Naive thymus-derived CD4-positive, alpha-beta T cell (primary cell): ENCODE measurements at regions of chr10 and their contacts with region 1.

Region 1: GRCh38 chr10:68331455-68332258 is at the start of gene HNRNPH3:
- DNase-seq: peak; percentile 97 to 99 (median 99)
- ATAC-seq: peak; percentile 86
- H3K4me3 ChIP-seq: peak within 1 kb of the TSS; percentile 92
- H3K4me3 Mint-ChIP-seq: peak within 1 kb of the TSS; percentile 94 to 100 (median 100)
- H3K27ac ChIP-seq: peak within 1 kb of the TSS; percentile 99
- H3K27ac Mint-ChIP-seq: peak within 1 kb of the TSS; percentile 98 to 100 (median 100)
- H3K4me1 ChIP-seq: peaks cover 15 to 21% of the 10 kb centered on the region in 2 donors
- H3K4me1 Mint-ChIP-seq: peaks cover 40 to 65% (median 53%) of the 10 kb centered on the region in 7 donors
- H3K27me3 ChIP-seq: no peaks in the 10 kb centered on the region
- H3K27me3 Mint-ChIP-seq: peaks cover 0 to 4% (median 0%) of the 10 kb centered on the region in 5 donors
- total RNA-seq, gene HNRNPH3: 125 to 190 (median 156) TPM

Region 2: DNA sequence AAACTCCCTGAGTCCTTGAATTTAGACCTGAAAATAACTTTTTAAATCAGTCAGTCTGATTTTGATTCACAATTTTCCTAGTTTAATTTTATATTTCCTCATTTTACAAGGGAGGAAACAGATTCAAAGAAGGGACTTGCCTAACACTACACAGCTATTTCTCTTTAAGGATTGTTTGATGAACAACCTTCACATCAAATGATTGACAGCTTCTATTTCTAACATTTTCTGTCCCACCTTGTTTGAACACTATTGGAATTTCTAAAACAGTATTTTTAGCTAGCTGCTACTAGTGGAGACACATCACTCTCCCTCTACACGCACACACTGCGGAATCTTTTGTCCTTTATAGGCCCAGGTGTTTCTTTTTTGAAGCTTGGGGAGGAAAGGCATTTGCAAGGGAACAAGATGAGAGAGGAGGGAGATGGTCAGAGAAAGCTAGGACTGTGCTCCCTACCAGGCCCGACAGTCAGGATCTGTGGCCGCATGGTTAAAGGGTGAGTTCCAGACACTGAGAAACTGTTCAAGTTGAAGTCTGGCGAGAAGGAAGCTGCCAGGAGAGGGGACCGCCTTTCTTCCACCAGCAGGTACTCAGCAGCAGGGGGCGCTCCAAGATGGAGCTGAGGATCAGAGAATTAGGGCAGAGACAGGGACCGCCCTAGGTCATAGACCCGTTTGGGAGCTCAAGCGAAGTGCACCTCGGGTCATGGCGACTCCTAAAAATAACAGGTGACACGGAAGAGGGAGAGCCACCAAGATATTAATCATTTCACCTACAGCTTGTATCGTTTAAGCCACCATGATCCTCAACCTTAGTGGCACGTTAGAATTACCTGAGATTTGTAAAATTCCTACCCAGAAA is 543.4 kb before region 1 on chr10:
- CTCF ChIA-PET with region 1: no interaction called
- POLR2A ChIA-PET with region 1: no interaction called
- intact Hi-C with region 1: loop called in 1 of 2 experiments (anchors 2 kb)
- DNase-seq: peak; percentile 23 to 74 (median 52)
- ATAC-seq: peak; percentile 84
- H3K4me3 ChIP-seq: no peak overlapping the region
- H3K4me3 Mint-ChIP-seq: peak overlapping the region in 5 of 10 donors; percentile 2 to 71 (median 59)
- H3K27ac ChIP-seq: no peak overlapping the region
- H3K27ac Mint-ChIP-seq: peak overlapping the region in 3 of 9 donors; percentile 15 to 79 (median 35)
- H3K4me1 ChIP-seq: peaks cover 0 to 4% of the 10 kb centered on the region in 2 donors
- H3K4me1 Mint-ChIP-seq: peaks cover 11 to 54% (median 15%) of the 10 kb centered on the region in 7 donors
- H3K27me3 ChIP-seq: no peaks in the 10 kb centered on the region
- H3K27me3 Mint-ChIP-seq: no peaks in the 10 kb centered on the region

Region 3: DNA sequence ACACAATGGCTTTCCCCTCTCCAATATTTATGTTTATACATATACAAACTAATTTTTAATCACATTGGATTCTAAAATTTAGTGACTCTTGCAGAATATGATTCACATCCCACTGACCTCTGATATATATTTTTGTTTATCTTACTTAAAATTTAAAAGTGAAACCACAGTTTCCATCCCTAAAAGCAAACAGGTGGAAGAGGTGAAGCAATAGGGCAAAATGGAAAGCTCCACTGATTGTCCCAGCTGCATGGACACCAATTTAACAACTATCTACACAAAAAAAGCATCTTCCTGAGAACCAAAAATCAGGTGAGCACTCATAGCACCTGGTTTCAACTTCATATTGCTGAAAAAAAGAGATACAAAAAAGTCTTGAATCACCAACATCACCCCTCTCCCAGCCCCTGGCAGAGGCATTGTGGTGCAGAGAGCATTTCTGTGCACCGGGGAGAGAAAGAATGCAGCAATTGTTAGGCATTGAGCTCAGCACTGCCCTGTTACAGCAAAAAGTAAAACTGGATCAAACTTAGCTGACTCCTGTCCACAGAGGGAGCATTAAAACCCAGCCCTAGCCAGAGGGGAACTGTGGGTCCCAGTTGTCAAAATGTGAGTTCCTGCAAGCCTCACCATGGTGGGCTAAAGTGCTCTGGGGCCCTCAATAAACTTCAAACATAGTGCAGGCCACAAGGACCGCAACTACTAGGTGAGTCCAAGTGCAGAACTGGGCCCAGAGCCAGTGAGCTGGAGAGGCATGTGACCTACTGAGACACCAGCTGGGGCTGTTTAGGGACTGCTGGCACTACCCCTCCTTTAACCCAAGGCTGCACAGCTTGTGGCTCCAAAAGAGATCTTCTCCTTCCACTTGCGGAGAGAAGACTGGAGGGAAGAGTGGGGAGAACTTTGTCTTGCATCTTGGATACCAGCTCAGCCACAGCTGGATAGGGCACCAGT is 355.1 kb before region 1 on chr10:
- CTCF ChIA-PET with region 1: no interaction called
- POLR2A ChIA-PET with region 1: no interaction called
- intact Hi-C with region 1: no loop called
- DNase-seq: no peak
- ATAC-seq: no peak
- H3K4me3 ChIP-seq: no peak overlapping the region
- H3K4me3 Mint-ChIP-seq: no peak overlapping the region
- H3K27ac ChIP-seq: no peak overlapping the region
- H3K27ac Mint-ChIP-seq: peak overlapping the region in 3 of 9 donors; percentile 5 to 30 (median 20)
- H3K4me1 ChIP-seq: no peaks in the 10 kb centered on the region
- H3K4me1 Mint-ChIP-seq: peaks cover 0 to 19% (median 3%) of the 10 kb centered on the region in 7 donors
- H3K27me3 ChIP-seq: no peaks in the 10 kb centered on the region
- H3K27me3 Mint-ChIP-seq: no peaks in the 10 kb centered on the region

Region 4: GRCh38 chr10:68208424-68209042 is 123.1 kb before region 1 on chr10:
- CTCF ChIA-PET with region 1: interaction called, 4 read pairs
- POLR2A ChIA-PET with region 1: interaction called, 6 read pairs
- intact Hi-C with region 1: loop called in 1 of 2 experiments (anchors 5 kb)
- DNase-seq: no peak
- ATAC-seq: no peak
- H3K4me3 ChIP-seq: no peak overlapping the region
- H3K4me3 Mint-ChIP-seq: no peak overlapping the region
- H3K27ac ChIP-seq: no peak overlapping the region
- H3K27ac Mint-ChIP-seq: peak overlapping the region in 1 of 9 donors; percentile 22
- H3K4me1 ChIP-seq: no peaks in the 10 kb centered on the region
- H3K4me1 Mint-ChIP-seq: peaks cover 0 to 4% (median 0%) of the 10 kb centered on the region in 7 donors
- H3K27me3 ChIP-seq: no peaks in the 10 kb centered on the region
- H3K27me3 Mint-ChIP-seq: peaks cover 0 to 36% (median 10%) of the 10 kb centered on the region in 5 donors

Region 5: GRCh38 chr10:68342909-68343516 is 11.4 kb after region 1 on chr10:
- CTCF ChIA-PET with region 1: interaction called, 4 read pairs
- POLR2A ChIA-PET with region 1: interaction called, 28 read pairs
- intact Hi-C with region 1: loop called (anchors 1 to 2 kb)
- DNase-seq: no peak
- ATAC-seq: no peak
- H3K4me3 ChIP-seq: no peak overlapping the region
- H3K4me3 Mint-ChIP-seq: no peak overlapping the region
- H3K27ac ChIP-seq: no peak overlapping the region
- H3K27ac Mint-ChIP-seq: peak overlapping the region in 3 of 9 donors; percentile 13 to 43 (median 22)
- H3K4me1 ChIP-seq: peaks cover 0 to under 1% of the 10 kb centered on the region in 2 donors
- H3K4me1 Mint-ChIP-seq: peaks cover 10 to 38% (median 25%) of the 10 kb centered on the region in 7 donors
- H3K27me3 ChIP-seq: no peaks in the 10 kb centered on the region
- H3K27me3 Mint-ChIP-seq: no peaks in the 10 kb centered on the region

Region 6: GRCh38 chr10:68526626-68527307 is 195.1 kb after region 1 on chr10:
- CTCF ChIA-PET with region 1: no interaction called
- POLR2A ChIA-PET with region 1: no interaction called
- intact Hi-C with region 1: loop called (anchors 1 to 2 kb)
- DNase-seq: peak in 1 of 9 donors; percentile 4
- ATAC-seq: no peak
- H3K4me3 ChIP-seq: peak overlapping the region; percentile 91
- H3K4me3 Mint-ChIP-seq: peak overlapping the region; percentile 87 to 94 (median 92)
- H3K27ac ChIP-seq: peak overlapping the region; percentile 96
- H3K27ac Mint-ChIP-seq: peak overlapping the region; percentile 78 to 97 (median 95)
- H3K4me1 ChIP-seq: peaks cover 0 to 5% of the 10 kb centered on the region in 2 donors
- H3K4me1 Mint-ChIP-seq: peaks cover 0 to 20% (median 7%) of the 10 kb centered on the region in 7 donors
- H3K27me3 ChIP-seq: no peaks in the 10 kb centered on the region
- H3K27me3 Mint-ChIP-seq: no peaks in the 10 kb centered on the region

Region 7: GRCh38 chr10:69087590-69088470 is 756.2 kb after region 1 on chr10 and contains the start of gene SRGN:
- CTCF ChIA-PET with region 1: no interaction called
- POLR2A ChIA-PET with region 1: no interaction called
- intact Hi-C with region 1: loop called (anchors 2 kb)
- DNase-seq: peak; percentile 54 to 94 (median 87)
- ATAC-seq: peak; percentile 76
- H3K4me3 ChIP-seq: peak within 1 kb of the TSS; percentile 84
- H3K4me3 Mint-ChIP-seq: peak within 1 kb of the TSS; percentile 85 to 95 (median 93)
- H3K27ac ChIP-seq: peak within 1 kb of the TSS; percentile 97
- H3K27ac Mint-ChIP-seq: peak within 1 kb of the TSS; percentile 93 to 99 (median 98)
- H3K4me1 ChIP-seq: peaks cover 28 to 46% of the 10 kb centered on the region in 2 donors
- H3K4me1 Mint-ChIP-seq: peaks cover 25 to 66% (median 58%) of the 10 kb centered on the region in 7 donors
- H3K27me3 ChIP-seq: no peaks in the 10 kb centered on the region
- H3K27me3 Mint-ChIP-seq: no peaks in the 10 kb centered on the region
- total RNA-seq, gene SRGN: 66.6 to 748 (median 227) TPM